Activated CD8-positive, alpha-beta T cell treated with anti-CD3 and anti-CD28 coated beads, Interleukin-2, amount 10 ng/mL, durations not matched to agents 7 days and 5 days (primary cell): ENCODE measurements at regions of chr7 and their contacts with region 1.

Region 1: GRCh38 chr7:130982160-130982638 is 248.2 kb upstream of the KLF14 start:
- DNase-seq: peak; percentile 50
- ATAC-seq: peak; percentile 86
- H3K4me3 Mint-ChIP-seq: no peak overlapping the region
- H3K27ac Mint-ChIP-seq: no peak overlapping the region
- H3K4me1 Mint-ChIP-seq: peaks cover 29% of the 10 kb centered on the region
- H3K27me3 Mint-ChIP-seq: no peaks in the 10 kb centered on the region

Region 2: GRCh38 chr7:130887182-130888016 is 94.8 kb before region 1 on chr7:
- CTCF ChIA-PET with region 1: interaction called, 75 read pairs
- POLR2A ChIA-PET with region 1: no interaction called
- DNase-seq: no peak
- ATAC-seq: no peak
- H3K4me3 Mint-ChIP-seq: no peak overlapping the region
- H3K27ac Mint-ChIP-seq: peak overlapping the region; percentile 16
- H3K4me1 Mint-ChIP-seq: peaks cover 46% of the 10 kb centered on the region
- H3K27me3 Mint-ChIP-seq: no peaks in the 10 kb centered on the region

Region 3: DNA sequence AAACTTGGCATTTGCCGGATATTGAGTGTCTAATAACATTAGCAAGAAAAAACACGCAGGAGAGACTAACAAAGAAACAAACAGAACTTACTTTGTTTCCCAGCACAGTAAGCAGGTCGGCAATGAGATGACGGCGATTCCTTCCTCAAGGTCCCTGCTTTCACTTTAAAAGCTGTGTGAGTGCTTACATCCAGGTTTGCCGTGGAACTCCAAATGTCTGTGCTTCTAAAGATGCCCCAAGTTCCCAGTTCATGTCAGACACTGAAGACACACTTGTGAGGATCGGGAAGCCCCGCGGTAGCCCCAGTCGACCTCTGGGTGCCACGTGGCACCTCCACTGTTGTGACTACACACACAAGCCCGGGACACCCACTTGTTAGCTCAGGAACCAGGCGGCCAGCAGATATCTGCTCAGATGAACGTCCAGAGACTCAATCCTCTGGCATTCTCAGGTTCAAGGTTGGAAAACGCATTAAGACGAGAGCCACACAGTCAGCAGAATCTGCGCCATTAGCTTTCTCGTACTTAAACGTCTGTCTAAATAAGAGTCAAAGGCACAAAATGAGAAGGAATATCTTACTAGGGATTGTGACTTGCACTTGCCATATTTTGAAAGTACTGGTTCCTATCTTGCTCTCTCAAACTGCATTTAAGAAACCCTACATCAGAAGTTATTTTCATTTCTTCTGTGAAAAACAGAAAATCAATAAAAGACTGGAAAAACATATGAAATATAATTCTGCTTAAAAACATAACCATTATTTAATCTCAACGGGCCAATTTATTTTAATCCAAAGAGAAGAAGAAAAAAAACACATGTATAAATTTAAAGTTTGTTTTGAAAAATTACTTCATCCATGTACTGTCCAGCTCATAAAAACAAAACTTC is 40.6 kb before region 1 on chr7:
- CTCF ChIA-PET with region 1: interaction called, 28 read pairs
- POLR2A ChIA-PET with region 1: interaction called, 3 read pairs
- DNase-seq: no peak
- ATAC-seq: peak; percentile 18
- H3K4me3 Mint-ChIP-seq: peak overlapping the region; percentile 72
- H3K27ac Mint-ChIP-seq: peak overlapping the region; percentile 75
- H3K4me1 Mint-ChIP-seq: peaks cover 83% of the 10 kb centered on the region
- H3K27me3 Mint-ChIP-seq: no peaks in the 10 kb centered on the region

Region 4: DNA sequence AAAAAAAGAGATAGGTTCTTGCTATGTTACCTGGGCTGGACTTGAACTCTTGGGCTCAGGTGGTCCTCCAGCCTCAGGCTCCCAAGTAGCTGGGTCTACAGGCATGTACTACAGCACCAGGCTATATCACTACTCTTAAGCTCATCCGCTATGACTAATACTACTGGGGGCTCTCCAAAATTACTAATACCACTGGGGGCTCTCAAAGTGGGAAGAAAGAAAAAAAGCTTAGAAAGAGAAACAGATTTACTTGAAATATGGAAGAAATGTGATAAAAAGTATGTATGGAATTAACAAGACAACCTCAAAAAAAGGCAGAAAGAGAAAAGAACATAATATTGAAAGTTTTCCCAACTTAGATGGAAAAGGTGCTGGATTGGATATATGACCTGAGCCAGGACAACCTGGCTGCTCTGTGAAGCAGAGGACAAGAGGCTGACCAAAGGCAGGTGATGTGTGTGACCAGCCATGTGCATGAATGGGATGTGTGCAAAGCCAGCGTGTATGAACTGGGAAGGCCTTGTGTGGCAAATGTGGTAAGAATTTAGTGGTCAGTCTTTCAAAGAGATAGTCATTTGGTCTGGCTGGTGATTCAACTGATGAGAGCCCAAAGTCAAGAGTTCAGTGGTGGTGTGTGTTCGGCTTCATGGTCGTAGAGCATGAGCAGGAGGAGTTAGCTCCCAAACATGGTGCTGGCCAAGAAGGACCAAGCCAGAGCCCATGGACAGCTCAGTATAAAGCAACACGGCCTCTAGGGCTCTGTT is 15.8 kb before region 1 on chr7:
- CTCF ChIA-PET with region 1: interaction called, 75 read pairs
- POLR2A ChIA-PET with region 1: interaction called, 21 read pairs
- DNase-seq: no peak
- ATAC-seq: peak; percentile 23
- H3K4me3 Mint-ChIP-seq: no peak overlapping the region
- H3K27ac Mint-ChIP-seq: peak overlapping the region; percentile 5
- H3K4me1 Mint-ChIP-seq: peaks cover 61% of the 10 kb centered on the region
- H3K27me3 Mint-ChIP-seq: no peaks in the 10 kb centered on the region

Region 5: GRCh38 chr7:131007394-131008330 is 25.5 kb after region 1 on chr7:
- CTCF ChIA-PET with region 1: interaction called, 55 read pairs
- POLR2A ChIA-PET with region 1: no interaction called
- DNase-seq: peak; percentile 82
- ATAC-seq: peak; percentile 70
- H3K4me3 Mint-ChIP-seq: peak overlapping the region; percentile 69
- H3K27ac Mint-ChIP-seq: peak overlapping the region; percentile 94
- H3K4me1 Mint-ChIP-seq: peaks cover 63% of the 10 kb centered on the region
- H3K27me3 Mint-ChIP-seq: no peaks in the 10 kb centered on the region

Region 6: DNA sequence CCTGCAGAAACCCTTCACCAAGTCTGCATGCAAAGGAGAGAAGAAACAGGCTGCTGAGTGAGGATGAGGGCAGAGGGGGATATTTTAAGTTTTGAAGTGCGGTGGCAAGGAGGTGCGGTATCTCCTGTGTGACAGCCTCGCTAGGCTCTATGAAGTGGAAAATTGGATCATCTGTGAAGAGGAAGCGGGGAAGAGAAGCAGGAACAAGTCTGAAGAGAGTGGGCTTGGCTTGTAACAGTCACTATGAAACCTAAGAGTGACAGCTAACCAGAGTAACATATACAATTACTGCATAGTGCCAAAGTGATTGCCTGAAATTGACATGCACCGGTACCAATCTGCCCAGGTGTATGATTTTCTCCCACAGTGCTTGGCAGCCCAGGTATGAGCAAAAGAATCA is 39.3 kb after region 1 on chr7:
- CTCF ChIA-PET with region 1: interaction called, 27 read pairs
- POLR2A ChIA-PET with region 1: no interaction called
- DNase-seq: no peak
- ATAC-seq: peak; percentile 46
- H3K4me3 Mint-ChIP-seq: peak overlapping the region; percentile 1
- H3K27ac Mint-ChIP-seq: peak overlapping the region; percentile 66
- H3K4me1 Mint-ChIP-seq: peaks cover 30% of the 10 kb centered on the region
- H3K27me3 Mint-ChIP-seq: no peaks in the 10 kb centered on the region

Region 7: GRCh38 chr7:131045526-131045925 is 63.3 kb after region 1 on chr7:
- CTCF ChIA-PET with region 1: interaction called, 132 read pairs
- POLR2A ChIA-PET with region 1: no interaction called
- DNase-seq: no peak
- ATAC-seq: no peak
- H3K4me3 Mint-ChIP-seq: no peak overlapping the region
- H3K27ac Mint-ChIP-seq: no peak overlapping the region
- H3K4me1 Mint-ChIP-seq: peaks cover 30% of the 10 kb centered on the region
- H3K27me3 Mint-ChIP-seq: no peaks in the 10 kb centered on the region